HepG2 (cell line): ENCODE measurements at regions of chr1 and their contacts with region 1.

Region 1: GRCh38 chr1:156740679-156741612 is at the start of gene MRPL24:
- DNase-seq: peak; percentile 99
- ATAC-seq: peak; percentile 91
- H3K4me3 ChIP-seq: peak within 1 kb of the TSS; percentile 78 to 93 (median 81)
- H3K27ac ChIP-seq: peak within 1 kb of the TSS; percentile 83
- H3K4me1 ChIP-seq: peaks cover 23% of the 10 kb centered on the region
- H3K27me3 ChIP-seq: no peaks in the 10 kb centered on the region; a peak in 1 of 5 replicates
- CTCF ChIP-seq: peak; percentile 33; the same call in 1 of the 2 replicates
- EP300 ChIP-seq: peak in 1 of 2 experiments; percentile 70; a peak in 3 of 4 replicates
- POLR2A ChIP-seq: peak; percentile 66 to 85
- RAD21 ChIP-seq: 0 out of 2 replicates have a peak, but pooled peaks have one; percentile 35
- total RNA-seq, gene MRPL24: 42.9 and 45.7 TPM in 2 replicates

Region 2: GRCh38 chr1:156551866-156552265 is 189.1 kb before region 1 on chr1:
- CTCF ChIA-PET with region 1: no interaction called
- POLR2A ChIA-PET with region 1: no interaction called
- in situ Hi-C with region 1: no loop called
- intact Hi-C with region 1: no loop called
- DNase-seq: no peak
- ATAC-seq: no peak
- H3K4me3 ChIP-seq: no peak overlapping the region
- H3K27ac ChIP-seq: no peak overlapping the region
- H3K4me1 ChIP-seq: peaks cover 15% of the 10 kb centered on the region
- H3K27me3 ChIP-seq: no peaks in the 10 kb centered on the region
- CTCF ChIP-seq: no peak
- EP300 ChIP-seq: no peak
- POLR2A ChIP-seq: no peak
- RAD21 ChIP-seq: no peak

Region 3: DNA sequence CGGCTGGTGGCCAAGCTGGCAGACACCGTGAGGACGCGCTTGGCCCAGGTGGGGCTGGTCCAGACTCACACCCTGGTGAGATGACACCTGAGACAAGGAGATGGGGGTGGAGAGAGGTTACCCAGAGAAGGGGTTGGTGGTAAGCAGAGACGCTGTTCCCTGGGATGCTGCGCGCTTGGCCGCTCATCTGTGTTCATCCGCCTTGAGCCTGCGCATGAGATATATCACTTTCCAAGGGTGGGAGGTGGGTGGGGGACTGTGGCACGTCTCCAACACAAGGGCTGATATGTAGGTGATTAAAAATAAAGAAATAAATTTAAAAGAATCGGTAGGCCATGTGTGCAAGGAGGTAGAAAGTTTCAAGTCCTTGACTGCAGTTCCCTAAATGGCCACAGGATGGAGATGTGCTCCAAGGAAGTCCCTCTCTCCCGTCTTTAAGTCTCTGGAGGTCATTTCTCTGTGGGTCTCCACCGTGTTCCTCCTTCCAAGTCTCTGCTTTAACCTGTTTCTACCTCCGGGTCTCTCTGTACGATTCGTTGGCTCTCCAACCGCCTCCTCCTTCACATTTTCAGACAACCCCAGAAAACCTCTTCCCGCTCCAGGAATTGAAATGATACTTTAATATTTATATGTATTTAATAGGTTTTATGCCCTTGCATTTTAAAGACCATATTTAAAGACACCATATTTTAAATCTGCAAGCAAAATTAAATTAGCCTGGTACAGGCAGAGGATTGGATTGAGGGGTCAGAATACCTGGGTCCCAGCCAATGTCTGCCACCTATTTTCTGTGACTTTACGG is 156.9 kb before region 1 on chr1:
- CTCF ChIA-PET with region 1: no interaction called
- POLR2A ChIA-PET with region 1: no interaction called
- in situ Hi-C with region 1: no loop called
- intact Hi-C with region 1: no loop called
- DNase-seq: peak; percentile 40
- ATAC-seq: no peak; the same call in 2 of the 3 replicates
- H3K4me3 ChIP-seq: no peak overlapping the region
- H3K27ac ChIP-seq: no peak overlapping the region
- H3K4me1 ChIP-seq: 0 out of 2 replicates have a peak, but pooled peaks cover 14% of the 10 kb centered on the region
- H3K27me3 ChIP-seq: peaks cover 6 to 39% of the 10 kb centered on the region in 2 experiments; a peak in 4 of 5 replicates
- CTCF ChIP-seq: peak; percentile 76
- EP300 ChIP-seq: no peak
- POLR2A ChIP-seq: no peak
- RAD21 ChIP-seq: no peak

Region 4: DNA sequence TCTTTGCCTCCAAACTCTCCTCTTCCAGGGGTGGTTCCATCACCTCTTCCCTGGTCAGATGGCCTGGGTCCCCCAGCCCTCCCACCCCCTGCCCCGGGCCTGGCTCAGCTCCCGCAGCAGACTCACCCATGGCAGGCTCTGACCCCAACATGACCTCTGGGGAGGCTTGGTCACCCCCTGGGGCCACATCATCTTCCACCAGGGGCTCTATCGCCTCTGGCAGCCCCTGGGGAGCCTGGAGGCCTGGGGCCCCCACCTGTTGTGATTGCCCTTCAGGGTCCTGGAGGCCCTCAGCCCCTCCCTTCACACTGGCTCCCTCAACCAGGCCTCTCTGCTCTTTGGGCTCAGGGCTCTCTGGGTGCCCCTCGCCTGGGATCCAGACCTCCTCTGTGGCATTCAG is 70.2 kb before region 1 on chr1:
- CTCF ChIA-PET with region 1: no interaction called
- POLR2A ChIA-PET with region 1: no interaction called
- in situ Hi-C with region 1: no loop called
- intact Hi-C with region 1: no loop called
- DNase-seq: no peak
- ATAC-seq: no peak
- H3K4me3 ChIP-seq: no peak overlapping the region
- H3K27ac ChIP-seq: no peak overlapping the region
- H3K4me1 ChIP-seq: peaks cover 60% of the 10 kb centered on the region
- H3K27me3 ChIP-seq: no peaks in the 10 kb centered on the region
- CTCF ChIP-seq: no peak
- EP300 ChIP-seq: no peak
- POLR2A ChIP-seq: no peak
- RAD21 ChIP-seq: no peak

Region 5: DNA sequence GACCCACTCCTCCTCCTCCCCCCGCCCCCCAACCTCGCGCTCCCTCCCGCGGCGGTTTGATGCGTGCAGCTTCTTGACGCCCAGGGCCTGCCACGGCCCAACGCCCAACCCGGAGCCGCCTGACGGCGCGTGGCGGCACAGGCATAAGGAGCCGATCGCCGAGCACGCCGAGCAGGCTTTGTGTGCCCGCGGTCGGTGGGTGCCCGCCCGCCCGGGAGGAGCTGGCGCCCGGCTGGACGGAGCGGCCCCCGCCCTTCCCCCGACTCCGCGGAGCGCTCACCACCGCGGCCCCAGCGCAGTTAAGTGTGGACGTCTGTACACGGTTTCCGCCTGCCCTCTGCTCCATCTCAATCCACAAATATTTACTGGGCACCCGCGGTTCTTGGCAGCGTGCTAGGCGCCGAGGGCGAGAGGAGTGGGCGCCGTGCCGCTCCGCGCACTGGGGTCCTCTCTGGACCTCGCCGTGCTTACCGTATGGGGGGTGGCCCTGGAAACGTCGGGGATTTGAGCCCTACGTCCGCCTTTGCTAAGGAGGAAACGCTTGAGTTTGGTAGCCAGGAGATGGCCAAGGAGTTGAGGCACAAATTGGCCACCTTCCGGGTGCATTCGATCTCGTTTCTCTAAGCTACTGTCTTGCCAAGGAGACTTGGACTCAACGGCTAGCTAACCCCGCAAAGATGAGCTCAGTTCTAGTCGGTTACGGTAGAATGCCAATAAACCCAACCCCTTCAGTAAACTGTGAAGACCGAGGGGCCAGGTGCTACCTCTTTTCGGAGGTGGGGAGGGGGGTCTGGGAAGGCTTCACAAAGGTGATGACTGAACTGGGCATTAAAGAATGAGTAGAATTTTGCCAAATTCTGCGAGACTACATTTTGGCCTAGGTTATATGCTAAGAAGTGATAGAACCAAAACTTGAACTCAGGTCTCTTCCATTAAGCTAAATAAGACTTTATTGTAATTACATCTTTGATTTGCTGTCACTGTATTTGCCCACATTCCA is 11.1 kb after region 1 on chr1:
- CTCF ChIA-PET with region 1: no interaction called
- POLR2A ChIA-PET with region 1: interaction called, 67 read pairs
- in situ Hi-C with region 1: no loop called
- intact Hi-C with region 1: no loop called
- DNase-seq: peak; percentile 90
- ATAC-seq: peak; percentile 73
- H3K4me3 ChIP-seq: peak overlapping the region; percentile 83 to 90 (median 87)
- H3K27ac ChIP-seq: peak overlapping the region; percentile 100
- H3K4me1 ChIP-seq: peaks cover 37% of the 10 kb centered on the region
- H3K27me3 ChIP-seq: no peaks in the 10 kb centered on the region; a peak in 1 of 5 replicates
- CTCF ChIP-seq: peak; percentile 25; the same call in 1 of the 2 replicates
- EP300 ChIP-seq: peak in 1 of 2 experiments; percentile 28; a peak in 2 of 4 replicates
- POLR2A ChIP-seq: peak in 1 of 2 experiments; percentile 67; a peak in 2 of 4 replicates
- RAD21 ChIP-seq: peak; percentile 34; the same call in 1 of the 2 replicates

Region 6: GRCh38 chr1:156767101-156767878 is 26.3 kb after region 1 on chr1 and contains the start of gene PRCC:
- CTCF ChIA-PET with region 1: no interaction called
- POLR2A ChIA-PET with region 1: interaction called, 125 read pairs
- in situ Hi-C with region 1: no loop called
- intact Hi-C with region 1: loop called (anchors 1 kb)
- DNase-seq: peak; percentile 99
- ATAC-seq: peak; percentile 96
- H3K4me3 ChIP-seq: peak within 1 kb of the TSS; percentile 85 to 100 (median 92)
- H3K27ac ChIP-seq: peak within 1 kb of the TSS; percentile 84
- H3K4me1 ChIP-seq: peaks cover 49% of the 10 kb centered on the region
- H3K27me3 ChIP-seq: no peaks in the 10 kb centered on the region; a peak in 1 of 5 replicates
- CTCF ChIP-seq: no peak
- EP300 ChIP-seq: no peak
- POLR2A ChIP-seq: peak; percentile 49 to 73
- RAD21 ChIP-seq: no peak
- total RNA-seq, gene PRCC: 24.2 and 26.8 TPM in 2 replicates

Region 7: GRCh38 chr1:156772728-156773497 is 32.0 kb after region 1 on chr1:
- CTCF ChIA-PET with region 1: no interaction called
- POLR2A ChIA-PET with region 1: interaction called, 125 read pairs
- in situ Hi-C with region 1: no loop called
- intact Hi-C with region 1: no loop called
- DNase-seq: no peak
- ATAC-seq: no peak
- H3K4me3 ChIP-seq: no peak overlapping the region
- H3K27ac ChIP-seq: no peak overlapping the region
- H3K4me1 ChIP-seq: peaks cover 50% of the 10 kb centered on the region
- H3K27me3 ChIP-seq: no peaks in the 10 kb centered on the region
- CTCF ChIP-seq: no peak
- EP300 ChIP-seq: no peak
- POLR2A ChIP-seq: no peak
- RAD21 ChIP-seq: no peak